ENCODE measurements at regions of chr17 and their contacts with region 1.

Region 1: GRCh38 chr17:40362696-40363110 is 1.8 kb downstream of the GJD3 start:
- DNase-seq: peak; percentile 70
- ATAC-seq: peak; percentile 71
- H3K4me3 ChIP-seq: peak overlapping the region; percentile 48
- H3K27ac ChIP-seq: no peak overlapping the region; the same call in 1 of the 2 replicates
- H3K4me1 ChIP-seq: peaks cover 4% of the 10 kb centered on the region; the same call in 1 of the 2 replicates
- H3K27me3 ChIP-seq: no peaks in the 10 kb centered on the region
- CTCF ChIP-seq: peak; percentile 77
- POLR2A ChIP-seq: peak; percentile 23; the same call in 1 of the 2 replicates
- RAD21 ChIP-seq: peak; percentile 68

Region 2: DNA sequence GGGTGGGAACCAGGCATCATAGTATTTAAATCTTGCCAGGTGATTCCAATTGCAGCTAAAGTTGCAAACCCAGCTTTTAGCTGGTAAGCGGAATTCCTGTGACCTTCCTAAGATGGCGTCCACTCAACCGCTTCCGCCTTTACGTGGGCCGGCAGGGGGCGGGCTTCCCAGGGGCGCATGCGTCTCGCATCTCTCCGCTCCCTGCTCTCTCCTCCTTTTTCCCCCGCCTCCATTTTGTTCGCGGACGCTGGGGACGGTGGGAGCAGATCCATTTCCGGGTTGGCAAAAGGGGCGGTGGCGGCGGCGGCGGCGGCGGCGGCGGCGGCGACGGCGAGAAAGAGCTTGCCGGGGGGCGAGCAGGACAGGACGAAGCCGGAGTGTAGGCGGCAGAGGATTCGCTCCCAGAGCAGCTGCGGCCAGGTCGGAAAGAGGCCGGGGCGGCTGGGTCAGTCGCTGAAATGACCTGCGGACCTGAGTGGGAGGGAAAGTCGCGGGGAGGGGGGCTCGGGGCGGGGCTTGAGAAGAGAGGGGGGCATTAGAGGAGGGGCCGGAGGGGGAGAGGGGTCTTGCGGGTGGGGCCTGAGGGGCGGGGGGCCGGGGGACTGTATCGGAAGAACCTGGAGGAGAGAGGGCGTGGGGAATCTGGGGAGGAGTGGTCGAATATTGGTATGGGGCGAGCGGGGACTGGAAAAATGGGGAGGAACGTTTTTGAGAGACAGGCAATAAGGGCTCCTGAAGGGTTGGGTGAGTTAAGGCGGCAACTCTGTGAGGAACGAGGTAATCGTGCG is 143.4 kb before region 1 on chr17 and contains the start of gene WIPF2:
- CTCF ChIA-PET with region 1: no interaction called
- POLR2A ChIA-PET with region 1: no interaction called
- dilution Hi-C with region 1: no loop called
- in situ Hi-C with region 1: loop called (anchors 10 kb)
- intact Hi-C with region 1: no loop called
- DNase-seq: peak; percentile 94
- ATAC-seq: peak; percentile 99
- H3K4me3 ChIP-seq: peak within 1 kb of the TSS; percentile 70
- H3K27ac ChIP-seq: peak within 1 kb of the TSS; percentile 91
- H3K4me1 ChIP-seq: peaks cover 5% of the 10 kb centered on the region
- H3K27me3 ChIP-seq: no peaks in the 10 kb centered on the region
- CTCF ChIP-seq: peak; percentile 70
- POLR2A ChIP-seq: peak; percentile 50; the same call in 1 of the 2 replicates
- RAD21 ChIP-seq: no peak
- total RNA-seq, gene WIPF2: 2.0 and 2.8 TPM in 2 replicates

Region 3: DNA sequence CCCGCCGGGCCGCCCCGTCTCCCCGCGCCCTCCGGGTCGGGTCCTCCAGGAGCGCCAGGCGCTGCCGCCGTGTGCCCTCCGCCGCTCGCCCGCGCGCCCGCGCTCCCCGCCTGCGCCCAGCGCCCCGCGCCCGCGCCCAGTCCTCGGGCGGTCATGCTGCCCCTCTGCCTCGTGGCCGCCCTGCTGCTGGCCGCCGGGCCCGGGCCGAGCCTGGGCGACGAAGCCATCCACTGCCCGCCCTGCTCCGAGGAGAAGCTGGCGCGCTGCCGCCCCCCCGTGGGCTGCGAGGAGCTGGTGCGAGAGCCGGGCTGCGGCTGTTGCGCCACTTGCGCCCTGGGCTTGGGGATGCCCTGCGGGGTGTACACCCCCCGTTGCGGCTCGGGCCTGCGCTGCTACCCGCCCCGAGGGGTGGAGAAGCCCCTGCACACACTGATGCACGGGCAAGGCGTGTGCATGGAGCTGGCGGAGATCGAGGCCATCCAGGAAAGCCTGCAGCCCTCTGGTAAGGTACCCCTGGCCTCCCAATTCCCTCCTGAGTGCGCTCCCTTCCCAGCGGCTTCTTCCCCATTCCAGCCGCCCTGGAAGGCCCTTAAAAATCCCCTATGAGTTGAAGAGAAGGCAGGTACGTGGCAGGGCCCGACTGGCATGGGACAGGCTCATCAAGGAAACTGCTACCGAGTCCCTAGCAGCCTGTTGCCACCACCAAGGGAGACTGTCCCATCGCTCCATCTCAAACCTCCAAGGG is 81.1 kb after region 1 on chr17:
- CTCF ChIA-PET with region 1: no interaction called
- POLR2A ChIA-PET with region 1: no interaction called
- dilution Hi-C with region 1: no loop called
- in situ Hi-C with region 1: no loop called
- intact Hi-C with region 1: no loop called
- DNase-seq: peak; percentile 71
- ATAC-seq: peak; percentile 57
- H3K4me3 ChIP-seq: peak overlapping the region; percentile 98
- H3K27ac ChIP-seq: peak overlapping the region; percentile 80
- H3K4me1 ChIP-seq: peaks cover 24% of the 10 kb centered on the region
- H3K27me3 ChIP-seq: no peaks in the 10 kb centered on the region
- CTCF ChIP-seq: peak; percentile 54
- POLR2A ChIP-seq: 0 out of 2 replicates have a peak, but pooled peaks have one; percentile 22
- RAD21 ChIP-seq: peak; percentile 49

Region 4: DNA sequence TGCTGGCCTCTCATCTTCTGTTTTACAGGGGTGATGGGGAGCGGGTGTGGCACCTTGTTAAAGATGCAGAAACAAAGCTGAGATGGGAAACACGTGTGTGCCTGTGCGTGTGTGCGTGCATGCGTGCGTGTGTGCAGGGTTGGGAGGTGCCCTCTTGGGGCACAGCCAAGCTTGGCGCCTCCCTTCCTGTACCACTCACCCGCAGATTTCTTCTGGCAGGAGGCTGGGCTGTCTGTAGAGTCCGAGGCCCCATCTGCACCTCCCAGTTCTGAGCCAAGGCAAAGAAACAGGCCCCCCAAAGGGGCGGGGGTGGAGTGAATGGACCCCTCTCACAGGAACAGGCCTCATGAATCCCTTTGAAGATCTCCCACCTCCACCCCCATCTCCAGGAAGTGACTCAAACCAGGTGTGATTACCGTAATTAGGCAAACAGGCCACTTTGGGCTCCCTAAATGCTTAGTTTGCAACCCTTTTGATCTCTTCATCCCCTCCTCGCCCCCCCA is 117.8 kb after region 1 on chr17:
- CTCF ChIA-PET with region 1: no interaction called
- POLR2A ChIA-PET with region 1: no interaction called
- dilution Hi-C with region 1: no loop called
- in situ Hi-C with region 1: no loop called
- intact Hi-C with region 1: loop called (anchors 1 kb)
- DNase-seq: no peak
- ATAC-seq: no peak
- H3K4me3 ChIP-seq: no peak overlapping the region
- H3K27ac ChIP-seq: no peak overlapping the region; the same call in 1 of the 2 replicates
- H3K4me1 ChIP-seq: peaks cover 24% of the 10 kb centered on the region
- H3K27me3 ChIP-seq: no peaks in the 10 kb centered on the region
- CTCF ChIP-seq: no peak
- POLR2A ChIP-seq: no peak
- RAD21 ChIP-seq: no peak

Region 5: GRCh38 chr17:40559954-40560591 is 197.4 kb after region 1 on chr17:
- CTCF ChIA-PET with region 1: interaction called, 4 read pairs
- POLR2A ChIA-PET with region 1: no interaction called
- dilution Hi-C with region 1: no loop called
- in situ Hi-C with region 1: no loop called
- intact Hi-C with region 1: loop called (anchors 1 kb)
- DNase-seq: peak; percentile 94
- ATAC-seq: peak; percentile 97
- H3K4me3 ChIP-seq: no peak overlapping the region
- H3K27ac ChIP-seq: peak overlapping the region; percentile 69
- H3K4me1 ChIP-seq: peaks cover 28% of the 10 kb centered on the region
- H3K27me3 ChIP-seq: peaks cover 25% of the 10 kb centered on the region
- CTCF ChIP-seq: peak; percentile 99
- POLR2A ChIP-seq: peak; percentile 62
- RAD21 ChIP-seq: peak; percentile 100

Region 6: DNA sequence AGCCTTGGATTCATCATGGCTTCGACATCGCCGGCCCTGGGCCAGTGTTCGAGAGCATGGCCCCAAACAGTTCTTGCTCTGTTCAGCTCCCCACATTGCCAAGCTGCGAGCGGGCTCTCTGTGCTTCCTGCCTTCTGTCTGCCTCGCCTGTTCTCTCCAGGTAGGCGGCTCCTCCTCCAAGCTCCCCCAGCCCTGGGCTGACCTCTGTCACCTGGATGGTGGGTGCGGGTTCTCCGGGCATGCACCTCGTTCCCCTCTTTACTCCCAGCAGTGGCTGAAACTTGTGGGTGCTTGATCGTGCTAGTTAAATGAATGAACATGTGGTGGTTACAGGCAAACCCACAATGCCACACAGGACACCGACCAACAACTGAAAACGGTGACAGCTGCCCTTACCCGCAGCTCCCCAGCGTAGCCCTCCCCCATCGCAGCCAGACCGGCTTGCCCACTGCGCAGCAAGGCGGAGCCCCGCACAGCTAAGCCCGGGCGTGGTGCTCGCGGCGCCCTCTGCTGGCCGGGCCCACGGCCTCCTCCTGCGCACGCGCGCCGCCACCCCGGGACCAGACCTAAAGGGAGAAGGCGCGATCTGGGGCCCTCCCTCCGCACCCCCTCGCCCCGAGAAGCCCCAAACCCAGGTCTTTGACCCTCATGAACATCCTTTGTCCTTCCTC is 1303.0 kb after region 1 on chr17:
- CTCF ChIA-PET with region 1: no interaction called
- POLR2A ChIA-PET with region 1: no interaction called
- dilution Hi-C with region 1: no loop called
- in situ Hi-C with region 1: loop called (anchors 25 kb)
- intact Hi-C with region 1: loop called (anchors 2 kb)
- DNase-seq: peak; percentile 74
- ATAC-seq: peak; percentile 90
- H3K4me3 ChIP-seq: peak overlapping the region; percentile 40
- H3K27ac ChIP-seq: peak overlapping the region; percentile 55
- H3K4me1 ChIP-seq: peaks cover 11% of the 10 kb centered on the region
- H3K27me3 ChIP-seq: no peaks in the 10 kb centered on the region
- CTCF ChIP-seq: peak; percentile 94
- POLR2A ChIP-seq: no peak
- RAD21 ChIP-seq: peak; percentile 29; the same call in 1 of the 2 replicates

Measured in IMR-90 (cell line).